ENCODE measurements at regions of chr11 and their contacts with region 1.

Region 1: GRCh38 chr11:128157423-128158298 is 429.7 kb downstream of the ETS1 start:
- DNase-seq: no peak
- ATAC-seq: peak; percentile 88
- H3K4me3 ChIP-seq: peak overlapping the region in 1 of 2 donors; percentile 26
- H3K27ac ChIP-seq: no peak overlapping the region
- H3K4me1 ChIP-seq: no peaks in the 10 kb centered on the region
- H3K27me3 ChIP-seq: no peaks in the 10 kb centered on the region

Region 2: DNA sequence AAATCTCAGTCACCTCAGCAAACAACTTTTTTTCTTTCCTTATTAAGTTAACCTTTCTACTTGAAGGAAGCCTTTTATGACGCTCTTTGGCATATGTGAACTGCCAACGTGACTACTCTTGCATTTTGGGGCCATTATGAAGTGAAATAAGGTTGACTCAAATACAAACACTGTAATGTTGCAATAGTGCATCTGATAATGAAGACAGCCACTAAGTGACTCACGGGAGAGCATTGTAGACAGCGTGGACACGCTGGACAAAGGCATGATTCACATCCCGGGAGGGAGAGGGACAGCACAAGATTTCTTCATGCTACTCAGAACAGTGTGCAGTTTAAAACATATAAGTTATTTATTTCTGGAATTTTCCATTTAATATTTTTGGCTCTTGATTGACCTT is 131.1 kb before region 1 on chr11:
- intact Hi-C with region 1: loop called (anchors 2 to 5 kb)
- DNase-seq: no peak
- ATAC-seq: no peak
- H3K4me3 ChIP-seq: no peak overlapping the region
- H3K27ac ChIP-seq: no peak overlapping the region
- H3K4me1 ChIP-seq: peaks cover 0 to 3% of the 10 kb centered on the region in 2 donors
- H3K27me3 ChIP-seq: no peaks in the 10 kb centered on the region

Region 3: DNA sequence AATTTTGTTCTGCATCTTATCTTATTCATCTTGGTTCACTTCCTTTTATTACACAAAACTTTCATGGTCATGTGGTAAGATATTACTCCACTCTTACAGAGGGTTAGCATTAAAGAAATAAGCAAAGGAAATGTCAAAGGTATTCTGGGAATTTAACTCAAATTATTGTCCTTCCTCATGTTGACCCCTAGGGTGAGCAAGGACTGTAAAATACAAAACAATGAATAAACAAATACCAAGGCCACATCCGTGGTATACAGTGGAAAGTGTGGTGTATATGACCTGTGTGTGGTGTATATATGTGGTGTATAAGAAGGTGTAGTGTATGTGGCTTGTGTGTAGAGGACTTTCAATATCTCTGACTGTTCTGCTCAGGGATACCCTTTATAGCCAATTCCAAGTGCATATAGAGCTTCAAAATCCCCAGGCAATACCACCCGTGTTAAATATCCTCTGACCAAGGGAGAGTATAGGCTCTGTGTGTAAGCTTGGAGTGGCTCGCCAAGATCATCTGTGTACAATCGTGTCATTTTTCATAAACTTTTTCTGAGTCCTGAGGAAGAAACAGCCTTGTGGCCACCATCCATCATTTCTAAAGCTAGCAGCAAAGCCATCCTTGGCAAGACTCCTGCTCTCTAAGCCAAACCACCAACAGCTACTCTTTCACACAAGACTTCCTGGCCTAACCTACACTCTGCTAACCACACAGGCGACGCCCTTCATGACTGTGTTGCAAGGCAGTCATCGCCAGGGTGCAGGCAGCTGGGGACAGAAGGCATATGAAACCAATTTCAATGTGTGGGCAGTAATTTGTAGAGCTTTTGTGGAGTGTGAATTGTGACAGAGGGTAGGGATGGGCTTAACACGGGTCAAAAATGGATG is 118.3 kb before region 1 on chr11:
- intact Hi-C with region 1: loop called in 1 of 2 experiments (anchors 5 kb)
- DNase-seq: peak in 1 of 2 donors; percentile 76
- ATAC-seq: no peak
- H3K4me3 ChIP-seq: no peak overlapping the region
- H3K27ac ChIP-seq: no peak overlapping the region
- H3K4me1 ChIP-seq: no peaks in the 10 kb centered on the region
- H3K27me3 ChIP-seq: no peaks in the 10 kb centered on the region

Region 4: GRCh38 chr11:128086794-128087193 is 70.9 kb before region 1 on chr11:
- intact Hi-C with region 1: no loop called
- DNase-seq: no peak
- ATAC-seq: no peak
- H3K4me3 ChIP-seq: no peak overlapping the region
- H3K27ac ChIP-seq: no peak overlapping the region
- H3K4me1 ChIP-seq: no peaks in the 10 kb centered on the region
- H3K27me3 ChIP-seq: no peaks in the 10 kb centered on the region

Measured in aorta (tissue), 5 donors.